Prostate gland (tissue), 2 donors: ENCODE measurements at regions of chr17 and their contacts with region 1.

Region 1: DNA sequence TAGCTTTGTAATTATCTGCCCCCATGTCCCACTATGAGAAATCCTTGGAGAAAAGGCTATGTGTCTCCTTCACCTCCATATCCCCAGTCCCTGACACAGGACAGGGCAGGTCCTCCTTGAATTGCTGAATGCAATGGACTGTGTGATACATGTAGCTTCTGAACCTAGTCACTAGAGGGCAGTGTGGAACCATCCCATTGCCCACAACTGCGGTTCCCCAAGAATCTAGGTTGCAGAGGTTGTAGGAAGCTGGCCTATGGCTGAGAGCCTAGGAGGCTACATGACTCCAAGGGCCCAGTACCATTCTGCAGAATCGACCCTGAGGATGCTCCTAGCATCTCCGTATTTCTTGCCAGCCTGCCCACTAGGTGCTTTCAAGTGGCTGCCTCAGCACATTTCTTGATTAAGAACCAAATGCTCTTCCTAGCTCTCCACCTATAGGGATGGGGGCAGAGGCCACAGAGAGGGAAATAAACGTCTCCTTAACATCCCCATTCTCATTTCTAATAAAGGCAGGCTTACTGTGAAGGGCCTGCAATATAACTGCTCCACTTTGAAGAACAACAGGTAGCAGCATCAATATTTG is 394.0 kb downstream of the CA10 start:
- DNase-seq: peak; percentile 24
- H3K4me3 ChIP-seq: no peak overlapping the region
- H3K27ac ChIP-seq: no peak overlapping the region
- H3K4me1 ChIP-seq: no peaks in the 10 kb centered on the region
- H3K27me3 ChIP-seq: no peaks in the 10 kb centered on the region
- CTCF ChIP-seq: peak; percentile 40 to 70 (median 64)
- POLR2A ChIP-seq: no peak

Region 2: GRCh38 chr17:52110923-52111581 is 346.6 kb after region 1 on chr17:
- intact Hi-C with region 1: loop called (anchors 10 kb)
- DNase-seq: no peak
- H3K4me3 ChIP-seq: no peak overlapping the region
- H3K27ac ChIP-seq: no peak overlapping the region
- H3K4me1 ChIP-seq: no peaks in the 10 kb centered on the region
- H3K27me3 ChIP-seq: no peaks in the 10 kb centered on the region
- CTCF ChIP-seq: no peak
- POLR2A ChIP-seq: no peak